GM12878 (cell line): ENCODE measurements at regions of chr1 and their contacts with region 1.

Region 1: GRCh38 chr1:32247983-32248889 is 1.2 kb downstream of the FAM167B start:
- DNase-seq: no peak
- ATAC-seq: peak; percentile 69
- H3K4me3 ChIP-seq: peak overlapping the region; percentile 10; the same call in 1 of the 2 replicates
- H3K27ac ChIP-seq: peak overlapping the region; percentile 89
- H3K4me1 ChIP-seq: peaks cover 52% of the 10 kb centered on the region
- H3K27me3 ChIP-seq: no peaks in the 10 kb centered on the region
- CTCF ChIP-seq: peak; percentile 89 to 99 (median 96)
- EP300 ChIP-seq: no peak
- POLR2A ChIP-seq: peak; percentile 31; the same call in 1 of the 2 replicates
- RAD21 ChIP-seq: peak; percentile 64

Region 2: DNA sequence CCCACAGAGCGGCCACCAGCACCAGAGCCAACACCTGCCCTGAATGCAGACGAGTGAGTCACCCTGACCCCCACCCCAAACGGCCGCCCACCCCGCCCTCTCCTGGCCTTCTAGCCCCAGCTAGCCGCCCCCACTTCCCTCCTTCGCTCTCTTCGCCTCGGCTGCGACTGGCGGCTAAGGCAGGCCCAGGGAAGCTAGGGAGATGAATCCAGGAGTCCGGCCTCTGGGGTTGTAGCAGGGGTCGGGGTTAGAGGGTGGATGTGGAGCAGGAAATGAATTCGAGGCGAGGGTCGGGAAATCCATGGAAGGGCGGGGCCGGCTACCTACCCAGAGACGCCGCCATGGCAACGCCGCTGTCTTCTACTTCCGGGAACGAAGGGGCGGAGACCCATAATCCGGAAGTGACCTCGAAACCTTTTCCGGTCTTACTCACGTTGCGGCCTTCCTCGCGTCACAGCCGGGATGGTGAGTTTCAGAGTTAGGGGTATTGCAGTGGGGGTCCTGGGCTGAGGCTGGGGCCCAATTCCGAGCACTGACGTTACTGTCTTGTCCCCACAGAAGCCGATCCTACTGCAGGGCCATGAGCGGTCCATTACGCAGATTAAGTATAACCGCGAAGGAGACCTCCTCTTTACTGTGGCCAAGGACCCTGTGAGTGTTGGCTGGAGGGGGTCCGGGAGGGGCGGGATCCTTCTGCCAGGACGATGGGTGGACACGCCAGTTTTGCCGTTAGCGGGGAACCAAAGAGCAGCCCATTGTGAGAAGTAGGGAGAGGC is 26.1 kb before region 1 on chr1 and contains the starts of genes EIF3I and TMEM234:
- CTCF ChIA-PET with region 1: interaction called, 123 read pairs
- POLR2A ChIA-PET with region 1: interaction called, 18 read pairs
- RAD21 ChIA-PET with region 1: interaction called, 45 read pairs
- SMC1A ChIA-PET with region 1: interaction called, 44 read pairs
- in situ Hi-C with region 1: no loop called
- intact Hi-C with region 1: no loop called
- DNase-seq: peak; percentile 60
- ATAC-seq: peak; percentile 91
- H3K4me3 ChIP-seq: peak within 1 kb of the TSS; percentile 89
- H3K27ac ChIP-seq: peak within 1 kb of the TSS; percentile 98
- H3K4me1 ChIP-seq: peaks cover 12% of the 10 kb centered on the region
- H3K27me3 ChIP-seq: no peaks in the 10 kb centered on the region
- CTCF ChIP-seq: no peak
- EP300 ChIP-seq: no peak
- POLR2A ChIP-seq: peak; percentile 90
- RAD21 ChIP-seq: no peak
- polyA plus RNA-seq, gene EIF3I: 572 to 606 TPM
- polyA plus RNA-seq, gene TMEM234: 2.9 to 4.5 TPM

Region 3: DNA sequence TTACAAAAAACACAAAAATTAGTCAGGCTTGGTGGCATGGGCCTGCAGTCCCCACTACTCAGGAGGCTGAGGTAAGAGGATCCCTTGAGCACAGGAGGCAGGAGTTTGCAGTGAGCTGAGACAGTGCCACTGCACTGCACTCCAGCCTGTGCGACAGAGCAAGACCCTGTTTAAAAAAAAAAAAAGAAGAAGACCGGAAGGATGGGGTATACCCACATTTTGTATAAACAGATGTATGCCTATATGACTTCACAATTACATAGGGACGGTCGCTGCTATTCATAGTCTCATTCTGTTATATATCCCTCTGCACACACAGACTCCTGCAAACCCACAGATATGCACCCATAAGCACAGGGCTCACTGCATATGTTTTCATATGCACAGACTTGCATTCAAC is 15.5 kb after region 1 on chr1:
- CTCF ChIA-PET with region 1: interaction called, 39 read pairs
- POLR2A ChIA-PET with region 1: interaction called, 5 read pairs
- RAD21 ChIA-PET with region 1: interaction called, 7 read pairs
- SMC1A ChIA-PET with region 1: interaction called, 12 read pairs
- in situ Hi-C with region 1: no loop called
- intact Hi-C with region 1: no loop called
- DNase-seq: no peak
- ATAC-seq: peak; percentile 86
- H3K4me3 ChIP-seq: 0 out of 2 replicates have a peak overlapping the region, but pooled peaks have one; percentile 11
- H3K27ac ChIP-seq: peak overlapping the region; percentile 55; the same call in 1 of the 2 replicates
- H3K4me1 ChIP-seq: peaks cover 27% of the 10 kb centered on the region
- H3K27me3 ChIP-seq: no peaks in the 10 kb centered on the region
- CTCF ChIP-seq: no peak
- EP300 ChIP-seq: no peak
- POLR2A ChIP-seq: no peak
- RAD21 ChIP-seq: no peak

Region 4: DNA sequence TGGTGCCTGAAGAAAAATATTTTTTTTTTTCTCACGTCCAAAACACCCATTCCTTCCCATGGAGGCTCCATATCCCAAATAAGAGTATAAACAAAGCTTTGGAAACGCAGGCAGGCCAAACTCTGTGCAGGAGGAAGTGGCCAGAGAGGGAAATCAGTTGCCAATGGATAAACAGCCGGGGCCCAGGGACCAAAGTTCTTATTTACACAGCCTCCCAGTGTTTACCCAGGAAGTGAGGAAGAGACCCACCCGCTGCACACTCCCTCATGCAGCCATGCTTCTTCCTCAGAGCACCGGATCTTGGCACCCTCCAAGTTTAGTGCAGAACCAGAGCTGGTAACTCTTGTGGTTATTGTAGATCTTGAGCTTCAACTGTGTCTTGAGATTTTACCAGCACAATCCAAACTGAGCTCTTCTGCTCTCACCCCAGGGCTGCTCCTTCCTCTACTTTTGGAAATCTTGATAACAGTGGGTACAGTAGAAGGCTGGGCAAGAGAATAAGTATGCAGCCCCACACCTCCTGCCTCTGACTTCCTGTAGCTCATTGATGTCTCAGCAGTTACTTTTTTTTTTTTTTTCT is 73.6 kb after region 1 on chr1:
- CTCF ChIA-PET with region 1: interaction called, 58 read pairs
- POLR2A ChIA-PET with region 1: interaction called, 21 read pairs
- RAD21 ChIA-PET with region 1: interaction called, 29 read pairs
- SMC1A ChIA-PET with region 1: interaction called, 124 read pairs
- in situ Hi-C with region 1: no loop called
- intact Hi-C with region 1: loop called (anchors 5 kb)
- DNase-seq: no peak
- ATAC-seq: peak; percentile 9; the same call in 1 of the 3 replicates
- H3K4me3 ChIP-seq: no peak overlapping the region
- H3K27ac ChIP-seq: peak overlapping the region; percentile 69
- H3K4me1 ChIP-seq: peaks cover 54% of the 10 kb centered on the region
- H3K27me3 ChIP-seq: no peaks in the 10 kb centered on the region
- CTCF ChIP-seq: no peak
- EP300 ChIP-seq: no peak
- POLR2A ChIP-seq: no peak
- RAD21 ChIP-seq: no peak

Region 5: DNA sequence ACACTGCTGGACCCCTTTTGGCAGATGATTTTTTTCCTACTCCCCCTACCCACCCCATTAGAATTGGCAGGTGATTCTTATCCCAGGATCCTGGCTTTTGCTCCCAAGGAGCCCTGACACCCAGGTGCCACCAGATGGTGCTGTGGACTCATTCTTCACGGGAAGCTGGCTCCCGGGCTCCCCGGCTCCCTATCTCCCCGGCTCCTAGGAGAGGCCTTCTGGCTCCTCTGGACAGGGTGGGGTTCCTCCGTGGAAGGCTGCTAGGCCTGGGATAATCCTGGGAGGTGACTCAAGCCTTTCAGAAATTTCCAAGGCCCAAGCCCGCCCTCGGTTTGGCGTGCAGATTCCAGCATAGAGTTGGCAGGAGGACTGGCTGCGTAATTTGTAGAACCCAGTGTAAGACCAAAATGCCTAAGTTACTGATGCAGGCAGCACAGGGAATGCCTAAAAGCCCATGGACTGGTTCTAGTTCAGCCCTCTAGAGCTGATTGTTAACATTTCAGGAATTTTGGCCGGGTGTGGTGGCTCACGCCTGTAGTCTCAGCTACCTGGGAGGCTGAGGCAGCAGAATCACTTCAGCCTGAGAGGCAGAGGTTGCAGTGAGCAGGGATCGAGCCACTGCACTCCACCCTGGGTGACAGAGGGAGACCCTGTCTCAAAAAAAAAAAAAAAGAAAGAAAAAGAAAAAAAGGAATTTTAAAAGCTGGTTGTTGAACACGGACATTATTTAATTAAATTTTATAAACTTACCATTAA is 152.8 kb after region 1 on chr1:
- CTCF ChIA-PET with region 1: interaction called, 16 read pairs
- POLR2A ChIA-PET with region 1: no interaction called
- RAD21 ChIA-PET with region 1: interaction called, 3 read pairs
- SMC1A ChIA-PET with region 1: interaction called, 3 read pairs
- in situ Hi-C with region 1: no loop called
- intact Hi-C with region 1: no loop called
- DNase-seq: no peak
- ATAC-seq: peak; percentile 95
- H3K4me3 ChIP-seq: no peak overlapping the region
- H3K27ac ChIP-seq: no peak overlapping the region
- H3K4me1 ChIP-seq: no peaks in the 10 kb centered on the region
- H3K27me3 ChIP-seq: no peaks in the 10 kb centered on the region
- CTCF ChIP-seq: peak; percentile 87 to 94 (median 88)
- EP300 ChIP-seq: no peak
- POLR2A ChIP-seq: no peak
- RAD21 ChIP-seq: peak; percentile 81

Region 6: DNA sequence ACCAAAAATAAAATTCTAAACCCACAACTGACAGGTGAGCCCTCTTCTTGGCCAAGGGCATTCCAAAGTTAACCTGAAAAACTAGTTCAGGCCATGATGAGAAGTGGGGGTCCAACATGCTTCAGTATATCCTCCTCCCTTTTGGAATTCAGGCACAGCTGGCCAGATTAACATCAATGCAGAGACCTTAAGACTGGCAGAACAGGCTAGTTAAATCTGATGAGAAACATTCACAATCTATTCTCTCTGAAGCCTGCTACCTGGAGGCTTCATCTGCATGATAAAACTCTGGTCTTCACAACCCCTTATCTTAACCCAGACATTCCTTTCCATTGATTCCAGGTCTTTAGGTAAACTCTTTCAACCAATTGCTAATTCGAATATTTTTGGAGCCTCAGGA is 189.9 kb after region 1 on chr1:
- CTCF ChIA-PET with region 1: no interaction called
- POLR2A ChIA-PET with region 1: no interaction called
- RAD21 ChIA-PET with region 1: no interaction called
- SMC1A ChIA-PET with region 1: no interaction called
- in situ Hi-C with region 1: no loop called
- intact Hi-C with region 1: no loop called
- DNase-seq: no peak
- ATAC-seq: no peak
- H3K4me3 ChIP-seq: no peak overlapping the region
- H3K27ac ChIP-seq: no peak overlapping the region
- H3K4me1 ChIP-seq: no peaks in the 10 kb centered on the region
- H3K27me3 ChIP-seq: no peaks in the 10 kb centered on the region
- CTCF ChIP-seq: no peak
- EP300 ChIP-seq: no peak
- POLR2A ChIP-seq: no peak
- RAD21 ChIP-seq: no peak